CD14-positive monocyte (primary cell): ENCODE measurements at regions of chr11 and their contacts with region 1.

Region 1: GRCh38 chr11:61054927-61055562 is 47.2 kb upstream of the CD5 start:
- DNase-seq: no peak
- H3K4me3 ChIP-seq: no peak overlapping the region
- H3K4me3 Mint-ChIP-seq: no peak overlapping the region
- H3K27ac ChIP-seq: no peak overlapping the region
- H3K27ac Mint-ChIP-seq: peak overlapping the region in 1 of 7 donors; percentile 51
- H3K4me1 ChIP-seq: peaks cover 2 to 4% of the 10 kb centered on the region in 2 donors
- H3K4me1 Mint-ChIP-seq: peaks cover 11% of the 10 kb centered on the region
- H3K27me3 ChIP-seq: no peaks in the 10 kb centered on the region
- H3K27me3 Mint-ChIP-seq: peaks cover 7 to 17% (median 9%) of the 10 kb centered on the region in 3 donors
- CTCF ChIP-seq: no peak

Region 2: GRCh38 chr11:61019832-61020405 is 35.1 kb before region 1 on chr11:
- intact Hi-C with region 1: loop called in 1 of 2 experiments (anchors 5 kb)
- DNase-seq: no peak
- H3K4me3 ChIP-seq: no peak overlapping the region
- H3K4me3 Mint-ChIP-seq: no peak overlapping the region
- H3K27ac ChIP-seq: no peak overlapping the region
- H3K27ac Mint-ChIP-seq: no peak overlapping the region
- H3K4me1 ChIP-seq: peaks cover 3 to 6% of the 10 kb centered on the region in 2 donors
- H3K4me1 Mint-ChIP-seq: peaks cover 26% of the 10 kb centered on the region
- H3K27me3 ChIP-seq: peaks cover 8 to 25% of the 10 kb centered on the region in 2 donors
- H3K27me3 Mint-ChIP-seq: peaks cover 28 to 43% (median 30%) of the 10 kb centered on the region in 3 donors
- CTCF ChIP-seq: no peak

Region 3: DNA sequence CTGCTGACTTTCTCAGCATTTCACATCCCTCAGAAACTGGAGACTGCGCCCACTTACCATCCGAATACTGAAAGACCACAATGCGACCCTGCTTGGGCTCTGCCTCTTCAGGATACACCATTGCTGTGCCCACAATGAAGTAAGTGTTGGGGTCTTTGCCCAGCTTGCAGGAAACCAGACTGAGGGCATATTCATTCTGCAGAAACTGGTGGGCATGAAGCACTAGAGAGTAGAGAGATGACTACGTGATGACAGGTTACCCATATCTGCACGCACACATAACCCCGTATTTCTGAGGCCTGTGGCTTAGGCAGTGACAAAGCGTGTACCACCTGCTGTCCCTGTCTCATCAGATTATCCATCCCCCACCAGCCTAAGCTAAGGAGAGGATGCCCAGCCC is 254.7 kb after region 1 on chr11:
- intact Hi-C with region 1: no loop called
- DNase-seq: no peak
- H3K4me3 ChIP-seq: no peak overlapping the region
- H3K4me3 Mint-ChIP-seq: no peak overlapping the region
- H3K27ac ChIP-seq: no peak overlapping the region
- H3K27ac Mint-ChIP-seq: no peak overlapping the region
- H3K4me1 ChIP-seq: no peaks in the 10 kb centered on the region
- H3K4me1 Mint-ChIP-seq: no peaks in the 10 kb centered on the region
- H3K27me3 ChIP-seq: no peaks in the 10 kb centered on the region
- H3K27me3 Mint-ChIP-seq: no peaks in the 10 kb centered on the region
- CTCF ChIP-seq: no peak

Region 4: GRCh38 chr11:61361686-61362541 is 306.9 kb after region 1 on chr11 and contains the starts of genes CYB561A3 and TMEM138:
- intact Hi-C with region 1: no loop called
- DNase-seq: peak; percentile 92 to 95 (median 92)
- H3K4me3 ChIP-seq: peak within 1 kb of the TSS; percentile 65 to 89 (median 79)
- H3K4me3 Mint-ChIP-seq: peak within 1 kb of the TSS; percentile 97 to 100
- H3K27ac ChIP-seq: peak within 1 kb of the TSS; percentile 97 to 99
- H3K27ac Mint-ChIP-seq: peak within 1 kb of the TSS; percentile 97 to 100 (median 100)
- H3K4me1 ChIP-seq: peaks cover 60 to 65% of the 10 kb centered on the region in 2 donors
- H3K4me1 Mint-ChIP-seq: peaks cover 57% of the 10 kb centered on the region
- H3K27me3 ChIP-seq: no peaks in the 10 kb centered on the region
- H3K27me3 Mint-ChIP-seq: no peaks in the 10 kb centered on the region
- CTCF ChIP-seq: no peak
- polyA plus RNA-seq, gene CYB561A3: 79.7 to 112 (median 112) TPM
- polyA plus RNA-seq, gene TMEM138: 34.5 to 64.0 (median 50.7) TPM